ENCODE measurements at regions of chr11 and their contacts with region 1.

Region 1: DNA sequence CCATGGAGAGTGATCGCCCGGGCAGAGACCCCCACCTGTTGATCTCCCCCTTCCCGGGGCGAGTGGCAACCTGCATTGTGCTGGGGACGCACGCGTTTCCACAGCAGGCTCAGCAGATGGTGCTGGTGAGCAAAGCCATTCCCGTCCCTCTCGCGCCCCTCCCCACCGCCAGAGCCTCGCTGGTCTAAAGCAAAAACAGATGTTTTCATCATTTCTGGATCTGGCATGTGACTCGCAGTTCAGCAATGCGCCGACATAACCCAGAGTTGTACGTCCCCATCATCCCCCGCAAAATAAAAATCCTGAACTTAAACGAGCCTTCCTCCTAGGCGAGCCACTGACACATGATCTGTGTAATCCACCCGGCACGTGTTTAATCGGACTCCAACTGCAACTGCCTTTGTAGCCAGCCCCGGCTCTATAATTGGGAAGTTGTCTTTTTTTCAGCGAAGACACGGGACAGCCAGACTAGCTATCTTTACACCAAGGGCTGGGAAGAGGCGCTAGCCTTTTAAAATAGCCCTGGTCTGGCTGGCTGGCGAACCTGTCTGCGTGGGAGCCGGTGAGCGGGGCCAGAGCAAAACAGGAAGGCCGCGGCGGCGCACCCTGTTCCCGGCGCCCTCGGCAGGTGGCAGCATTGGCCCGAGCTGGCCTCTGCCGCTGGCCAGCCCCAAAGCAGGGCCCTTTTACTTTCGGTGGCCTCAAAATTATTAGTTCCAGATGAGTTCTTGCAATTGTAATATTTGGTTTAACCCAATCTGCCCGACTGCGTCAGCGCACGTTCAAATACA is 203.0 kb upstream of the SORL1-AS1 start:
- DNase-seq: peak; percentile 46
- H3K4me3 Mint-ChIP-seq: peak overlapping the region; percentile 79
- H3K27ac Mint-ChIP-seq: peak overlapping the region; percentile 15
- H3K4me1 Mint-ChIP-seq: peaks cover 19% of the 10 kb centered on the region
- H3K27me3 Mint-ChIP-seq: peaks cover 16% of the 10 kb centered on the region

Region 2: GRCh38 chr11:121557348-121557747 is 98.4 kb before region 1 on chr11:
- intact Hi-C with region 1: no loop called
- DNase-seq: no peak
- H3K4me3 Mint-ChIP-seq: no peak overlapping the region
- H3K27ac Mint-ChIP-seq: no peak overlapping the region
- H3K4me1 Mint-ChIP-seq: peaks cover 5% of the 10 kb centered on the region
- H3K27me3 Mint-ChIP-seq: peaks cover 1% of the 10 kb centered on the region

Region 3: DNA sequence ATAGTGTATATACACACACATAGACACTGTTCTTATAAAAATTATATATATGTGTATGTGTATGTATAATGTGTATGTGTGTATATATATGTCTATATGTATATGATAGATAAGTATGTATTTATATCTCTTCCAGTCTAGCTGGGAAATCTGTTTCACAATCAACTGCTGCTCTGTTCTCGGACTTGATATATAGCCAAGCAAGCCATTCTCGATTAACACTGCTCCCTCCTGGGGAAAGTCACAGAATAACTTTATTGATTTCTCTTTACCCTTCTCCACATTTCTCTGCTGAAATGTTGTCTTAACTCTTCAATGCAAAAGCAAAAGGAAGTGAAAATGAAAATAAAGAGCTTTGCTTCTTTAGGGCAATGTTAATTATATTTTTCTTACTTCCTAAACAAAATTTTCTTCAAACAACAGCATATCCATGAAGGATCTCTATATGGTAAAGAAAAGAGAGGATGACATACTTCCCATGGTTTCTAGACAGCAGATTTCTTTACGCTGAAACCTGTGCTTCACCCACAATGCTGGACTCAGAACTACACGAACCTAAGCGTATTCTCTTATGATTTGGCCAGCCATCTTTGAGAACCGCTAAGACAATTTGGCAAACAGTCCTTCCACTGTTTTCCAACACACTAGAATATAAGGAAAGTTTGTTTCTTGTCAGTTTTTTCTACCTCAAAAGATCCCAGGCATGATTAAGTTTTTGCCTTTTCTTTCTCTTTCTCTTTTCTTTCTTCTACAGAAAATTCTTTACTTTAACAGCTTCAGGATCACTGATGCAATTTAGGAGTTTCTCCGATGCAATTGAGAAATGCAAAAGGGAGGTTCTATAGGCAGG is 458.3 kb after region 1 on chr11:
- intact Hi-C with region 1: loop called (anchors 5 kb)
- DNase-seq: no peak
- H3K4me3 Mint-ChIP-seq: no peak overlapping the region
- H3K27ac Mint-ChIP-seq: no peak overlapping the region
- H3K4me1 Mint-ChIP-seq: no peaks in the 10 kb centered on the region
- H3K27me3 Mint-ChIP-seq: no peaks in the 10 kb centered on the region

Region 4: DNA sequence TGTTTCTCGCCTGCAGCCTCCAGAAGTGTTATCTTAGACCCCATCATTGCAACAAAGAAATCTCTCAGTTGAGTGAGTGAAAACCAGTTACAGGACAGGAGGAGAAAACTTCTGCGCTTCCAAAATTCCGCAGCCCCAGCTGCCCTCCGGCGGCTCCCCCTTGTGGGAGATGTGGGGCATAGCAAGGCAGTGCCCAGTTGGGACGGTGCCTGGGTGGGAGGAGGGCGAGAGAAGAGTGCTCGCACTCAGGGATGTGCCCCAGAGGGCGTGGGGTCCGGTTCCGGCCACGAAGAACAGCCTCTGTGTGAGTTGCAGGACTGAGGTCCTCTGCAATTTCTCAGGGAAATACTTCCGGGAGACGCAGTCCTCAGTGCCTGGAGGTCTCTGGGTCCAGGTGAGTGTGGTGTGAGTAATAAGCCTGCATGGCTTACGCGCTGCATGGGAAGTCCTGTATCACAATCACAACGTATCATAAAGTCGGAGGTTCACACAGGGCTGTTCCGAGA is 547.3 kb after region 1 on chr11:
- intact Hi-C with region 1: loop called (anchors 1 kb)
- DNase-seq: peak; percentile 4
- H3K4me3 Mint-ChIP-seq: no peak overlapping the region
- H3K27ac Mint-ChIP-seq: no peak overlapping the region
- H3K4me1 Mint-ChIP-seq: no peaks in the 10 kb centered on the region
- H3K27me3 Mint-ChIP-seq: peaks cover 11% of the 10 kb centered on the region

Region 5: GRCh38 chr11:122584670-122585069 is 928.9 kb after region 1 on chr11:
- intact Hi-C with region 1: loop called (anchors 10 kb)
- DNase-seq: no peak
- H3K4me3 Mint-ChIP-seq: no peak overlapping the region
- H3K27ac Mint-ChIP-seq: no peak overlapping the region
- H3K4me1 Mint-ChIP-seq: peaks cover 12% of the 10 kb centered on the region
- H3K27me3 Mint-ChIP-seq: peaks cover 8% of the 10 kb centered on the region

Region 6: GRCh38 chr11:122963961-122964360 is 1308.2 kb after region 1 on chr11:
- intact Hi-C with region 1: no loop called
- DNase-seq: no peak
- H3K4me3 Mint-ChIP-seq: no peak overlapping the region
- H3K27ac Mint-ChIP-seq: no peak overlapping the region
- H3K4me1 Mint-ChIP-seq: no peaks in the 10 kb centered on the region
- H3K27me3 Mint-ChIP-seq: peaks cover 16% of the 10 kb centered on the region

Measured in activated T-helper 1 cell treated with anti-CD3 and anti-CD28 coated beads, Interleukin-12 subunit alpha, Interleukin-12 subunit beta, Interleukin-2, Interleukin-4 antibody, amounts not matched to agents 30 ng/mL and 10 ng/mL and 1 ng/mL, durations not matched to agents 14 hours and 24 hours and 36 hours (primary cell).